ENCODE measurements at regions of chr2 and their contacts with region 1.

Region 1: DNA sequence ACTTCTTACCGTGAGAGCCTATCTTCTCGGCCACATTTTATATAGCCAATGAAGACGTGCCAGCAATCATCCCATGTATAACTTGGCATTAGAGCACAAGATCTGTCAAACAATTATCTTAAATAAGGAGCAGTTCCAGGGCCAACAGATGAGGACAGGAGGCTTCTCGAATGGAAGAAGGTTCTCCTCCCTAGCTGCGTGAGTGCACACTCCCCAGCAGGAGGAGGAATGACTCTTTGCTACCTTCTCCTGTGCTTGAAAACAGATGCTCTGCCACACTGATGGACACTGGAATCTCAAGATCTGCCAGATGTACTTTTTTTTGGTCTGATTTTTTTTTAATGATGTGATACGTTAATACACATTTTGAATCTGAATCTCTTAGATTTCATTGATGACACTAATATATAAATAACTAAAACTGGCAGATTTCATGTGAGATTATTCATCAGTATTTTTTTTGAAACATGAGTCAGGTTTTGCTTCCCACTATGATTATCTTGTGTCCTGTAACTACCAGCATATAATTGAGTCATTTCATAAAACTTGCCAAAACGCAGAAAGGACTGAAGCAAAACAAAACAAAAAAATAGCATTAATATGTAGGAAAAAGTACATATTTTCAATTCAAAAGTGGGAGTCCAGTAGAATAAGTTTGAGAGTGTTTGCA is 626 bp upstream of the VIT start:
- DNase-seq: no peak

Region 2: GRCh38 chr2:36659872-36660312 is 36.0 kb before region 1 on chr2:
- intact Hi-C with region 1: no loop called
- DNase-seq: no peak

Region 3: DNA sequence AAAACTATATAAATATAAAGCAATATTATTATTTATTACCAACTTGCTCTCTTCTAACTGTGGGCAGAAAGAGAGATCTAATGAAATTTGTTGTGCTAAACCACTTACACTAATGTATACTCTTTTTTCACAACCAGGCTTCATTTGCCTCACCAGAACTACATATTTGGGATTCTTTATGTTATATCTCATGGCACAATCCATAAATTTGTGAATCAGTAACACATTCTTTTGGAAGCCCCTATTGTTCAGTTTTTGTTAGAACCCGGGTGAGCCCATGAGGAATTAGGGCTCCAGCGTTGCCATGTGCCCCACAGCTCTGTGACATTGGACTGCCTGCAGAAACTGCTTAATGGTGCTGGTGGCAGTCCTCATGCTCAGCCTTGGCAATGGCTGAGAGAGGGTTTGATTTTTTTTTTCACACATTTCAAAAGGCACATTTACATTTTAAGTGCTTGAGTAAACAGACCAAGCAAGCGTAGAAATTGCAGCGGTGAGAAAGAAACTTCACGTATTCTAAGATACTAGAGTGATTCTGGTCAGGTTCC is 15.9 kb after region 1 on chr2:
- intact Hi-C with region 1: no loop called
- DNase-seq: no peak

Region 4: GRCh38 chr2:36780231-36780839 is 84.5 kb after region 1 on chr2:
- intact Hi-C with region 1: loop called in 1 of 2 experiments (anchors 5 kb)
- DNase-seq: no peak

Region 5: GRCh38 chr2:38362232-38362631 is 1666.4 kb after region 1 on chr2:
- intact Hi-C with region 1: no loop called
- DNase-seq: no peak

Region 6: GRCh38 chr2:38409156-38410122 is 1713.6 kb after region 1 on chr2:
- intact Hi-C with region 1: no loop called
- DNase-seq: no peak

Measured in posterior vena cava (tissue), 2 donors.